ENCODE measurements at regions of chr22 and their contacts with region 1.

Region 1: GRCh38 chr22:31399211-31400028 is at the start of gene DRG1:
- DNase-seq: peak; percentile 94 to 96 (median 95)
- ATAC-seq: peak; percentile 99
- H3K4me3 ChIP-seq: peak within 1 kb of the TSS; percentile 72
- H3K27ac ChIP-seq: peak within 1 kb of the TSS; percentile 97
- H3K4me1 ChIP-seq: peaks cover 2 to 4% of the 10 kb centered on the region in 2 experiments; a peak in 2 of 5 replicates
- H3K27me3 ChIP-seq: no peaks in the 10 kb centered on the region
- CTCF ChIP-seq: no peak
- EP300 ChIP-seq: no peak
- POLR2A ChIP-seq: peak; percentile 96
- RAD21 ChIP-seq: no peak
- polyA plus RNA-seq, gene DRG1: 159 to 211 TPM

Region 2: DNA sequence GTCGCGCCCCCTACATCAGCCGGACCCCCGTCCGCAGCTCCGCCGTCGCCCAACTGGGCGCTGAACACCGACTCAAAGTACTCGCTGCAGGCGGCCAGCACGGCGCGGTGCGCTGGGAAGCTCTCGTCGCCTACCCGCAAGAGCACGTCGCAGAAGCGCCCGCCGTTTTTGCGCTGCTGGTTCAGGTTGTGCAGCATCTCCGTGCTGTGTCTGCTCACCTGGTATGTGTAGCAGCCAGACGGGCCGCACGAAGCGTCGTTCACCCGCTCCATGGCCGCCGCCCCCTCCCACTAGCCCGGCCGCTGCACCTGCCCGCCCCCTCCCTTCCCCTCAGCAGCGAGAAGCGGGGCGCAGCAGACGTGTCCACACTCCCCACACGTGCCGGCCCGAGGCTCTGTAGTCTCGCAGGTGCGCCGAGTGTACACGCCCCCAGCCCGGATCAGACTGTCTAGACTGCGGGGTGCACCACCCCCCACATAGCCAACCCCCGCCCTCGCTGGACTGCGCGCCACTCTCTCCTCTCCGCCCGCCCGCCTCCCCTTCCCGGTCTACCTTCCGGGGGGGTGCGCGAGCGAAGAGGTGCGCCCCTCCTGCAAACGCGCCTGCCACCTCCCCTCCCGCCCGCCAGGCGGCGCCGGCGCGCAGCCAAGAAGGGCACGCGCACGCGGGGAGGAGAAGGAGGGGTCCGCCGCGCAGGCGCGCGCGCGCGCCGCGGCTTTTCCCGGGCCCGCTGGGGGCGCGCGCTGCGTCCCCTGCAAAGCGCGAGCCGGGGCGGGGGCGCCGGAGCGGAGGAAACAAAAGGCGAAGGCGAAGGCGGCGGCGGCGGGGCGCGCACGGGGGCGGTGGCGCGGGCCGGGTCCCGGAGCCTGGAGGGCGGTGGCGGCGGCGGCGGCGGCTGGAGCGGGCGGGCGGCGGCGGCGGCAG is 53.8 kb before region 1 on chr22:
- CTCF ChIA-PET with region 1: interaction called, 4 read pairs
- POLR2A ChIA-PET with region 1: no interaction called
- in situ Hi-C with region 1: loop called (anchors 5 kb)
- intact Hi-C with region 1: loop called (anchors 5 kb)
- DNase-seq: peak; percentile 91 to 92 (median 91)
- ATAC-seq: peak; percentile 71
- H3K4me3 ChIP-seq: peak overlapping the region; percentile 56
- H3K27ac ChIP-seq: peak overlapping the region; percentile 64; the same call in 1 of the 3 replicates
- H3K4me1 ChIP-seq: peaks cover 2 to 42% of the 10 kb centered on the region in 2 experiments; a peak in 4 of 5 replicates
- H3K27me3 ChIP-seq: no peaks in the 10 kb centered on the region
- CTCF ChIP-seq: peak; percentile 57 to 91 (median 76)
- EP300 ChIP-seq: no peak
- POLR2A ChIP-seq: no peak
- RAD21 ChIP-seq: peak; percentile 30 to 55

Region 3: DNA sequence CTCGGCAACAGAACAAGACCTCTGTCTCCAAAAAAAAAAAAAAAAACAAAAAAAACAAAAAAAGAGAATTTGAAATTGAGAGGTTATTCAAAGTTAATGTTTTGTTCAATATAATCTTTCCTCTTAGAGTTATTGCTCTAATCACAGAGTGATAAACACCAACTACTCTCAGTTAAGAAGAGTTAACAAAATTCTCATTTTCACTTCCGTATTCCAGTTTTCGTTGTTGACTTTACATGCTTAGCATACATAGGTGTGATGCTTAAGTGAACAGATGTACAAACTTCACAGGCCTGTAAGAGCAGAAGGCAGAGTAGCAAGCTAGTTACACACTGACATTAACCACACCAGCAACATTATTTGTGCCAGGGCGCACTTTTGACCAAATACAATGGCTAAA is 77.9 kb after region 1 on chr22:
- CTCF ChIA-PET with region 1: no interaction called
- POLR2A ChIA-PET with region 1: no interaction called
- in situ Hi-C with region 1: no loop called
- intact Hi-C with region 1: no loop called
- DNase-seq: no peak
- ATAC-seq: no peak
- H3K4me3 ChIP-seq: no peak overlapping the region
- H3K27ac ChIP-seq: no peak overlapping the region
- H3K4me1 ChIP-seq: no peaks in the 10 kb centered on the region
- H3K27me3 ChIP-seq: no peaks in the 10 kb centered on the region
- CTCF ChIP-seq: no peak
- EP300 ChIP-seq: no peak
- POLR2A ChIP-seq: no peak
- RAD21 ChIP-seq: no peak

Measured in K562 (cell line).